Esophagus muscularis mucosa (tissue), 4 donors: ENCODE measurements at regions of chr2 and their contacts with region 1.

Region 1: GRCh38 chr2:64767670-64768468 is 114.2 kb upstream of the SERTAD2 start:
- DNase-seq: peak; percentile 96
- H3K4me3 ChIP-seq: peak overlapping the region; percentile 79 to 89 (median 82)
- H3K27ac ChIP-seq: peak overlapping the region; percentile 92 to 99 (median 99)
- H3K4me1 ChIP-seq: peaks cover 16 to 37% (median 33%) of the 10 kb centered on the region in 4 donors
- H3K27me3 ChIP-seq: no peaks in the 10 kb centered on the region
- CTCF ChIP-seq: peak in 1 of 3 experiments; percentile 5
- EP300 ChIP-seq: no peak
- POLR2A ChIP-seq: peak; percentile 88

Region 2: GRCh38 chr2:64642520-64643277 is 125.2 kb before region 1 on chr2:
- intact Hi-C with region 1: no loop called
- DNase-seq: no peak
- H3K4me3 ChIP-seq: no peak overlapping the region
- H3K27ac ChIP-seq: peak overlapping the region; percentile 87 to 92 (median 89)
- H3K4me1 ChIP-seq: peaks cover 59 to 88% (median 80%) of the 10 kb centered on the region in 4 donors
- H3K27me3 ChIP-seq: no peaks in the 10 kb centered on the region
- CTCF ChIP-seq: no peak
- EP300 ChIP-seq: no peak
- POLR2A ChIP-seq: no peak

Region 3: GRCh38 chr2:64653349-64654062 is 114.4 kb before region 1 on chr2 and contains the start of gene SERTAD2:
- intact Hi-C with region 1: loop called (anchors 5 kb)
- DNase-seq: no peak
- H3K4me3 ChIP-seq: peak within 1 kb of the TSS; percentile 68 to 98 (median 93)
- H3K27ac ChIP-seq: peak within 1 kb of the TSS; percentile 99 to 100 (median 100)
- H3K4me1 ChIP-seq: peaks cover 39 to 56% (median 51%) of the 10 kb centered on the region in 4 donors
- H3K27me3 ChIP-seq: no peaks in the 10 kb centered on the region
- CTCF ChIP-seq: peak in 1 of 3 experiments; percentile 2
- EP300 ChIP-seq: no peak
- POLR2A ChIP-seq: peak; percentile 88
- total RNA-seq, gene SERTAD2: 12.1 to 18.1 (median 14.3) TPM

Region 4: GRCh38 chr2:64750817-64751285 is 17.0 kb before region 1 on chr2:
- intact Hi-C with region 1: loop called (anchors 2 kb)
- DNase-seq: peak; percentile 100
- H3K4me3 ChIP-seq: peak overlapping the region; percentile 77 to 88 (median 80)
- H3K27ac ChIP-seq: peak overlapping the region; percentile 96 to 99 (median 98)
- H3K4me1 ChIP-seq: peaks cover 12 to 35% (median 27%) of the 10 kb centered on the region in 4 donors
- H3K27me3 ChIP-seq: no peaks in the 10 kb centered on the region
- CTCF ChIP-seq: peak in 1 of 3 experiments; percentile 16
- EP300 ChIP-seq: no peak
- POLR2A ChIP-seq: peak; percentile 96

Region 5: DNA sequence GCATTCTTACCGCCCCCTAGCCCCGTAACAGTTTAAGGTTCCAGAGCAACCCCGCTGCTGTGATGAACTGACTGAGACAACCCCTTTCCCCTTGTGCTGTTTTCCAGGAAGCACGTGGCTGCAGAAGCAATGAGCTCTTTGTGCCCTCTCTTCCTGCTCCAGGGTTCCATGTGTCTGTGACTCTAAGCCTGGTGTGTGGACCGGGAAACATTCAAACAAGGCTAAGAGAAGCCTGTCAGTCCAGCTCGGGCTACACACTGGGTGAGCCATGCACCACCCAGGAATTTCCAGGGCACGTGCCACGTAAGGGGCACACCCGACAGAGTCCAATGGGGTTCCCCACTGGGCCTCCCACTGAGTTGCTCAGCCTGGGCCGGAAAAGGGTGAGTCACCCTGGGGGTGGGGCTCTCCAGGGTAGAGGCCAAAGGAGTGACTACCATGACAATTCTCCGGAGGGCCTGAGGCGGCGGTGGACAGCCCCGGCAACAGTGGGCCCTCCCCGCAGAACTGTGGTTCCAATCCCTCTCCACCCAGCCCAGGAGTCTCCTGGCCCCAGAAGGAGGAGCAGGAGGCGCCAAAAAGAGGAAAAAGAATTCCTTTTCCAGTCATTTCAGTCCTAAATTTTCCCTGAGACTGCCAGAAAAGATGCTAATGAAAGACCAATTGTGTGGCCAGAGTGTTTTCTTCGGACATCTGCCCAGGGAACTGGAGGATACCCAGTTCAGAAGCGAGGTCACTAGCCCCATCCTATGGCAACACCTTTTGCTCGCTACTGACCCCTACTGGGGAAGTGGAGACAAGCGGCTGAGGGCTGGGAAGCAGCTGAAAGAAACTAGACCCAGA is 63.5 kb after region 1 on chr2:
- intact Hi-C with region 1: loop called (anchors 5 kb)
- DNase-seq: peak; percentile 94
- H3K4me3 ChIP-seq: peak overlapping the region in 1 of 4 donors; percentile 15
- H3K27ac ChIP-seq: peak overlapping the region; percentile 44 to 65 (median 60)
- H3K4me1 ChIP-seq: peaks cover 9 to 14% (median 12%) of the 10 kb centered on the region in 4 donors
- H3K27me3 ChIP-seq: no peaks in the 10 kb centered on the region
- CTCF ChIP-seq: peak; percentile 76 to 89 (median 88)
- EP300 ChIP-seq: no peak
- POLR2A ChIP-seq: no peak

Region 6: GRCh38 chr2:64859312-64860212 is 91.7 kb after region 1 on chr2:
- intact Hi-C with region 1: loop called (anchors 5 kb)
- DNase-seq: peak; percentile 95
- H3K4me3 ChIP-seq: peak overlapping the region; percentile 58 to 61 (median 59)
- H3K27ac ChIP-seq: peak overlapping the region; percentile 94 to 96 (median 95)
- H3K4me1 ChIP-seq: peaks cover 30 to 55% (median 50%) of the 10 kb centered on the region in 4 donors
- H3K27me3 ChIP-seq: no peaks in the 10 kb centered on the region
- CTCF ChIP-seq: peak in 1 of 3 experiments; percentile 4
- EP300 ChIP-seq: no peak
- POLR2A ChIP-seq: no peak

Region 7: GRCh38 chr2:65198737-65199136 is 430.9 kb after region 1 on chr2:
- intact Hi-C with region 1: no loop called
- DNase-seq: no peak
- H3K4me3 ChIP-seq: no peak overlapping the region
- H3K27ac ChIP-seq: no peak overlapping the region
- H3K4me1 ChIP-seq: no peaks in the 10 kb centered on the region
- H3K27me3 ChIP-seq: no peaks in the 10 kb centered on the region
- CTCF ChIP-seq: no peak
- EP300 ChIP-seq: no peak
- POLR2A ChIP-seq: no peak